ENCODE measurements at regions of chr13 and their contacts with region 1.

Region 1: DNA sequence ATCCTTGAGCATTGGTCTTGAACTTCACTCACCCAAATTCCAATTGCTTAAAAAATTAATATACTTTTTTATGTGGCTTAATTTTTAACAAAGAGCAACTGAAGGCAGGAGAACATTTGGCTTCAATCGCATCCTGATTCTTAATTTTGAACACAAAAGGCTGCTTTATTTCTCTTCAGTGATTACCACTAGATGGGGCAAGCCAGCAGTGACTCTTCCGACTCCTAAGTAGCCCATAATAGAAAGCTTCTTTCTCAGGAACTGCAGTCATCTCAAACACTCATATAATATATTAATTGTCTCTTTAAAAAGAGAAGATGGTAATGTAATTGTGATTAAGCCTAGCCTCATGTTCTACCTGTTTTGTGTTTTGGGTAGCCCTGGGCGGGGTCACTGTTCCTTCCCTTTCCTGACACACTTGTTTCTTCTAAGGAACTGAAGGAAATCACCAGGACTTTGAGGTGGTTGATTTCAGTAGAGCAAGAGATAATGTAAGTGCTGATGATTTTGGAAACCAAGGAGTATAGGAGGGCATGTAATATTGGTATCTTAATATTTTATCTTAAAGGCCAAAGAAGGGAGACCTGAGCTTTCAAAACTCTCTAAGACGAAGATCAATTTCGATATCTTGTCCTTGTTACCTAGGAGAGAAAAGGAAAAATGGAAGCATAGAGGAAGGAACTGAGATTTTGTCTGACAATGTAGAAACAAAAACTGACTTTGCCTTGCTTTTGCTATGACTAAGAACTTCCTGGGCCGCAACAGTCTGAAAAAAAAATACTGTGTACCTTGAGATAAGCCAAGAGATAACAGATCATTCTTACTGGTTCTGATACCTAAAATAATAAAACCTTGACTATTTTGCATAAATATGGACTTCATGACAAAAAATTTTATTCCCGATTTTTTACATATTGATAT is 73.1 kb downstream of the TNFSF13B start:
- DNase-seq: peak in 6 of 9 donors; percentile 10 to 48 (median 35)
- ATAC-seq: peak; percentile 69
- H3K4me3 ChIP-seq: peak overlapping the region; percentile 15
- H3K4me3 Mint-ChIP-seq: peak overlapping the region in 7 of 10 donors; percentile 1 to 85 (median 60)
- H3K27ac ChIP-seq: peak overlapping the region; percentile 44
- H3K27ac Mint-ChIP-seq: peak overlapping the region in 7 of 9 donors; percentile 0 to 89 (median 77)
- H3K4me1 ChIP-seq: peaks cover 4 to 20% of the 10 kb centered on the region in 2 donors
- H3K4me1 Mint-ChIP-seq: peaks cover 4 to 57% (median 16%) of the 10 kb centered on the region in 7 donors
- H3K27me3 ChIP-seq: no peaks in the 10 kb centered on the region
- H3K27me3 Mint-ChIP-seq: peaks cover 0 to 16% (median 0%) of the 10 kb centered on the region in 5 donors

Region 2: DNA sequence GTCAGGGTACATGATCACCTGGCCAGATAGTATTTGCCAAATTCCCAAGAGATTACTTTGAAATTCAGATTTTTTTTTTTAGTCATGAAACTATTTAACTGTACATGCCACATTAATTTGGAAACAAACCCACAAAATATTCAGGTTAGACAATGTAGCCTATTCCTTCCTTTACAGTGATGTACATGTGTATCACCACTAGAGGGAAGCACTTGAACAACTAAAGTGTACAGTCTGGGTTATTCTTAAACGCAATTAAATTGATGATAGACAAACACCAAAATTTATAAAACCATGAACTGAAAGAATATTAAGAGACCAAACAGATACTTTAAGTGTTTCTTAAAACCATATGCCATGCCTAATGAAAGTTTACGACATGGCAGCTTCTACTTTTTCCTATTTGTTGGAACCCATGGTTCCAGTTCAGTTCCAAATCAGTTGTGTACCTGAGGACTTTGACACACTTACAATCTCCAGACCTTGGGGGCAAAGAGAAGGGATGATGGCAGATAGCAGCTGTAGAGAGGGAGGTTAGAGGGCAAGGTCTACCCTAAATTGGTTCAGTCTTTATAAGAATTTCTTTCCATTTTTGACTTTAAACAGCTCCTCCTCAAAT is 20.3 kb before region 1 on chr13:
- CTCF ChIA-PET with region 1: interaction called, 7 read pairs
- POLR2A ChIA-PET with region 1: interaction called, 3 read pairs
- intact Hi-C with region 1: loop called in 1 of 2 experiments (anchors 1 kb)
- DNase-seq: peak in 7 of 9 donors; percentile 12 to 58 (median 48)
- ATAC-seq: peak; percentile 92
- H3K4me3 ChIP-seq: no peak overlapping the region
- H3K4me3 Mint-ChIP-seq: no peak overlapping the region
- H3K27ac ChIP-seq: no peak overlapping the region
- H3K27ac Mint-ChIP-seq: no peak overlapping the region
- H3K4me1 ChIP-seq: peaks cover 0 to 12% of the 10 kb centered on the region in 2 donors
- H3K4me1 Mint-ChIP-seq: peaks cover 0 to 33% (median 17%) of the 10 kb centered on the region in 7 donors
- H3K27me3 ChIP-seq: no peaks in the 10 kb centered on the region
- H3K27me3 Mint-ChIP-seq: peaks cover 5 to 47% (median 7%) of the 10 kb centered on the region in 5 donors

Region 3: GRCh38 chr13:108425056-108425455 is 82.4 kb after region 1 on chr13:
- CTCF ChIA-PET with region 1: no interaction called
- POLR2A ChIA-PET with region 1: no interaction called
- intact Hi-C with region 1: no loop called
- DNase-seq: no peak
- ATAC-seq: no peak
- H3K4me3 ChIP-seq: no peak overlapping the region
- H3K4me3 Mint-ChIP-seq: no peak overlapping the region
- H3K27ac ChIP-seq: no peak overlapping the region
- H3K27ac Mint-ChIP-seq: no peak overlapping the region
- H3K4me1 ChIP-seq: no peaks in the 10 kb centered on the region
- H3K4me1 Mint-ChIP-seq: peaks cover 0 to 9% (median 0%) of the 10 kb centered on the region in 7 donors
- H3K27me3 ChIP-seq: no peaks in the 10 kb centered on the region
- H3K27me3 Mint-ChIP-seq: no peaks in the 10 kb centered on the region

Region 4: GRCh38 chr13:108495646-108496361 is 153.2 kb after region 1 on chr13:
- CTCF ChIA-PET with region 1: no interaction called
- POLR2A ChIA-PET with region 1: interaction called, 3 read pairs
- intact Hi-C with region 1: loop called in 1 of 2 experiments (anchors 1 kb)
- DNase-seq: peak in 1 of 9 donors; percentile 5
- ATAC-seq: peak; percentile 31
- H3K4me3 ChIP-seq: peak overlapping the region; percentile 46
- H3K4me3 Mint-ChIP-seq: peak overlapping the region in 9 of 10 donors; percentile 52 to 89 (median 82)
- H3K27ac ChIP-seq: no peak overlapping the region
- H3K27ac Mint-ChIP-seq: peak overlapping the region in 1 of 9 donors; percentile 44
- H3K4me1 ChIP-seq: no peaks in the 10 kb centered on the region
- H3K4me1 Mint-ChIP-seq: peaks cover 3 to 21% (median 16%) of the 10 kb centered on the region in 7 donors
- H3K27me3 ChIP-seq: no peaks in the 10 kb centered on the region
- H3K27me3 Mint-ChIP-seq: peaks cover 31 to 64% (median 45%) of the 10 kb centered on the region in 5 donors

Region 5: DNA sequence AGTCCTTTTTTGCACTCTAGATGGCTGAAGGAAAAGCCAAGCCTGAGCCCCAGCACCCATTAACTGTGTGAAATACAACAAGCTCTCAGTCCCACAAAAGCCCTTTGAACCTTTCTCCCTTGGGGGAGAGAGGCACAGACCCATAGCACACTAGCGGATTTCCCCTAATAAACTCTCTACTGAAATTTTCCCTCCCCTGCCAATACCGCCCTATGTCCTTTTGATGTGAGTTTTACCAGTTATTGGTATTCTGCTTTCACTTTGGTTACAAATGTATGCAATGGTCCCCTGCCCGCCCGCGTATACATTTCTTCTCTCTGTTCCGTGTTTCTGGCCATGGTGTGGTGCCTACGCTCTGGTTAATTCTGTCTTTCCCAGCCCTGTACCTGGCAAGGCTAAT is 232.8 kb after region 1 on chr13:
- CTCF ChIA-PET with region 1: no interaction called
- POLR2A ChIA-PET with region 1: no interaction called
- intact Hi-C with region 1: loop called in 1 of 2 experiments (anchors 5 kb)
- DNase-seq: no peak
- ATAC-seq: no peak
- H3K4me3 ChIP-seq: no peak overlapping the region
- H3K4me3 Mint-ChIP-seq: no peak overlapping the region
- H3K27ac ChIP-seq: no peak overlapping the region
- H3K27ac Mint-ChIP-seq: no peak overlapping the region
- H3K4me1 ChIP-seq: no peaks in the 10 kb centered on the region
- H3K4me1 Mint-ChIP-seq: peaks cover 0 to 1% (median 0%) of the 10 kb centered on the region in 7 donors
- H3K27me3 ChIP-seq: no peaks in the 10 kb centered on the region
- H3K27me3 Mint-ChIP-seq: peaks cover 0 to 7% (median 0%) of the 10 kb centered on the region in 5 donors

Region 6: DNA sequence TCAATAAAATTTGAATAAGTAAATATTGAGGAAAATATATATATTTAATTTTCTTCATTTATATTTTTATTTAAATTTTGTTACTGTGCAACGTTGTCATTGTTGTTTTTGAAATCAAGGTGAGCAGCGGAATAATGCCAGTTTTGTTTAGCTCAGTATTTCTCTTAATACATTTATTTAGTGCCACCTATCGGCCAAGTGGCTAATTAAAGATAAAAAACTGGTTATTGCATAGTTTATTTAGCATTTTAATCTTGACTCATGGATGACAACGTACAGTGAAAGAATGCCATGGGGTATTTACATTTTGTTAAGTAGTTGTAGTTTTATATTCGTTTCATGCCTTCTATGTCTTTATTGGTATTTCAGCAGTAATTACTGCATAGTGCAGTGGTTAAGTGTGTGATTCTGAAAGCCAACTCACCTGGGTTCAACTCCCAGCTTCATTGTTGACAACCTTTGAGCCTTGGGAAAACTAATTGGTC is 552.6 kb after region 1 on chr13:
- CTCF ChIA-PET with region 1: interaction called, 5 read pairs
- POLR2A ChIA-PET with region 1: no interaction called
- intact Hi-C with region 1: loop called (anchors 1 to 5 kb)
- DNase-seq: peak in 5 of 9 donors; percentile 10 to 25 (median 21)
- ATAC-seq: no peak
- H3K4me3 ChIP-seq: no peak overlapping the region
- H3K4me3 Mint-ChIP-seq: no peak overlapping the region
- H3K27ac ChIP-seq: no peak overlapping the region
- H3K27ac Mint-ChIP-seq: no peak overlapping the region
- H3K4me1 ChIP-seq: peaks cover 0 to 5% of the 10 kb centered on the region in 2 donors
- H3K4me1 Mint-ChIP-seq: peaks cover 0 to 16% (median 6%) of the 10 kb centered on the region in 7 donors
- H3K27me3 ChIP-seq: no peaks in the 10 kb centered on the region
- H3K27me3 Mint-ChIP-seq: peaks cover 5 to 24% (median 7%) of the 10 kb centered on the region in 5 donors